AG04450 (cell line): ENCODE measurements at regions of chr2 and their contacts with region 1.

Region 1: DNA sequence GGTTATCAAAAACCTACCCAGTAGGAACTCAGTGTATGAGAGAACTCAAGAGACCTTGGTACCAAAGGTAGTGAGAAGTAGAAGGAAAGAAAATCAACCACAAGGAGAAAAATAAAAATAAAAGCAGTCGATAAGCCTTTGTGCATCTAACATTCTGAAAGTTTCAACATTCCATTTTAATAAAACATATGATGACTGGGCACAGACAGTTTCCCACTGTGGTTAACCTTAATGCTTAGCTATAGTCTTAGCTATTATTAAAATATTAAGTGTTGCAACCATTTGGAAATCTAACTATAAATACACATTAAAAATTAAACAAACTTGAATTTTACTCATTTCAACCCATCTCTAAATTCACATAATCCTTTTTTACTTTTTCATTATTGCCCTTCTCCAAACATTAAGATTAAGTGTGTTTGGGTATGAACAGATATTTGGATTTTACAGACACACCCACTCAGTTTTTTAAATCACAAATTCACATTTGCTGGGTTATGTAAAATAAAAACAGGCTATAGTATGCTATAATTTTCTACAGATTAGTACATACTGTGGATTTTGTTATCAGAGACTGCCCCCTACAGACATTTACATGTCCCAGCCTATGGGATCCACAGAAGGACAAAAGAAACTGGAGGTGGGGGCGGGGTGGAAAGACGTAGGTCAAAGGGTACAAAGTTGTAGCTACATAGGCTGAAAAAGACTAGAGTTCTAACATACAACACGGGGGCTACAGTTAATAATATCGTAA is 32.8 kb downstream of the SRBD1 start:
- DNase-seq: no peak
- H3K4me3 ChIP-seq: no peak overlapping the region
- H3K27ac ChIP-seq: no peak overlapping the region
- H3K27me3 ChIP-seq: no peaks in the 10 kb centered on the region
- CTCF ChIP-seq: peak; percentile 59

Region 2: GRCh38 chr2:44981136-44982108 is 596.8 kb before region 1 on chr2:
- CTCF ChIA-PET with region 1: interaction called, 33 read pairs
- POLR2A ChIA-PET with region 1: no interaction called
- DNase-seq: peak; percentile 55
- H3K4me3 ChIP-seq: no peak overlapping the region
- H3K27ac ChIP-seq: no peak overlapping the region
- H3K27me3 ChIP-seq: peaks cover 16% of the 10 kb centered on the region
- CTCF ChIP-seq: peak; percentile 86

Region 3: DNA sequence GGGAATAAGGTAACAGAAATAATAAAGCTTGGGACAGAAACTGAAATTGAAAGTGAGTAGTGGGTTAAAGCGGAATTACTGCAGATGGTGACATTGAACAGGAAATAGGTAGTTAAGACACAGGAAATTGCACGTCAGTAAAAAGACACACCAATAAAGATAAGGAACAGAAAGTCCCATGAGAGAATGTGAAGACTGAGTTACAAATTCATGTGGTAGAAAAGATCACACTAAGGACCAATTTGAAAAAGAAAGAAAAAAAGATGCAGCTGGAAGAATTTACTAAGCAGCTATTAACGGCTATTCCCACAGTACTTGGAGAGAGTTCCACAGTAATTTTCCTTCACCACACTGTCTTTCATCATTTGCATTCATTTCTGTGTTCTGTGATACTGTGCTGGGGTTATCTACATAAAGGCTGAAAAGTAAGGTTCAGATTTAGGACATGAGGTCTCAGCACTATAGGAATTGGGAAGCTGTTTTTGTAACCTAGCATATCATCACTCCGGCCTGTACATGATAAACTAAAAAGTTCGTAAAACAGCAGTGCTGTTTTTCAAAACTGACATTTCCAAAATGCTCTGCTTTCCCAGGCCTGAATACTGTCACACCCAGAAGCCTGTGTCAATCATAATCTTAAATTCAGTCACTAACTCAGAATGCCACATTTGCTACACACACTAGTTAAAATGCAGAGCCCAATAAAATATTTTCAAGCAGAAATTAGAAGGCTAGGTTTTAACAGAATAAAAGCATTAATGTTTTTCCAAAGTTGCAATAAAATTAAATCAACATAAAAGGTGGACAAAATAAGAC is 10.1 kb before region 1 on chr2:
- CTCF ChIA-PET with region 1: interaction called, 12 read pairs
- POLR2A ChIA-PET with region 1: interaction called, 3 read pairs
- DNase-seq: no peak
- H3K4me3 ChIP-seq: no peak overlapping the region
- H3K27ac ChIP-seq: no peak overlapping the region
- H3K27me3 ChIP-seq: no peaks in the 10 kb centered on the region
- CTCF ChIP-seq: no peak

Region 4: DNA sequence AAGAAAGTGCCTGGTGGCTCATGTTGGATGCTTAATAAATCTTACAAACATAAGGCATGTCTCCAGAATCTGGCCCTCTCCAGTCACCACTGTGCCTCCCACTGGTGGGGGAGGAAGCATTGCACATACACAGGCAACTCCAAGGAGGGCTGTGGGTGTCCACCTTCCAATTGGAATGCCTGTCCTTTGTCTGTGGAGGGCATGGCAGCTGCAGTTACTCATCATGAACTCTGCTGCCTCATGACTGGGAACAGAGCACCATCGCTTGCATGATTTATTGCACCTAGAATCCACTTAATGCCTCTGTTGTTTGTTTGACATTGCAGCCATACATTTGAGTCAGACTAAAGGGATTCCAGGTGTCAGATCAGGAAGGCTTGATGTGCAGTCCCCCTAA is 352.2 kb after region 1 on chr2:
- CTCF ChIA-PET with region 1: interaction called, 10 read pairs
- POLR2A ChIA-PET with region 1: no interaction called
- DNase-seq: peak; percentile 23
- H3K4me3 ChIP-seq: no peak overlapping the region
- H3K27ac ChIP-seq: no peak overlapping the region
- H3K27me3 ChIP-seq: no peaks in the 10 kb centered on the region
- CTCF ChIP-seq: no peak